Adrenal gland (tissue), 19 donors: ENCODE measurements at regions of chr3 and their contacts with region 1.

Region 1: DNA sequence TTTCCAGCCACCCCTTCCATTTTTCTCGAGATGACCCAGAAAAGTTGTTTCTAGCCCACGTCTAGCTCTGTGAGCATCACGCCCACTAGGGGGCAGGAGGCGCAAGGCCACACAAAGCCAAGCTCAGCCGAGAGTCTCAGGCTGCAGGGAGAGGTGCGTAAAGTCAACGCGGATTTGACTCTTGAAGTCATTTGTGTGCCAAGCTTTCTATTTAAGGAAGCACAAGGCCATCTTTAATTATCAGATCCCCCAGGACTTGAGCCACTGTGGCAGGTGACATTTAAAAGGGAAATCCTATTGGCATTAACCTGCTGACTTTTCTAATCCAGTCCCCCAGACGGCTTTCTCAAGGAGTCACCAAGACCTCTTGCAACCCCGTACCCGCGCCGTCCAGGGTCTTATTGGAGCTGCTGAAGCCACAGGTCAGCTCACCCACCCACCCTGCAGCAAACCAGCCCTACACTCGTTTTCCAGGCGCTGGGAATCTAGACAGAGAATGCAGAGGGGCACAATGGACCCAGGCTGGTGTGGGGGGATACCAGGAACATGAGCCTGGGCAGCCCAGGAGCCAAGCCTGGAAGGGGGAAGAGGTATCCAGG is 62.1 kb downstream of the CAPN7 start:
- DNase-seq: peak; percentile 87 to 96 (median 93)
- H3K4me3 ChIP-seq: no peak overlapping the region
- H3K27ac ChIP-seq: peak overlapping the region; percentile 69 to 94 (median 89)
- H3K4me1 ChIP-seq: peaks cover 54 to 83% of the 10 kb centered on the region in 2 donors
- H3K27me3 ChIP-seq: no peaks in the 10 kb centered on the region
- CTCF ChIP-seq: peak; percentile 91 to 98 (median 96)
- POLR2A ChIP-seq: no peak

Region 2: DNA sequence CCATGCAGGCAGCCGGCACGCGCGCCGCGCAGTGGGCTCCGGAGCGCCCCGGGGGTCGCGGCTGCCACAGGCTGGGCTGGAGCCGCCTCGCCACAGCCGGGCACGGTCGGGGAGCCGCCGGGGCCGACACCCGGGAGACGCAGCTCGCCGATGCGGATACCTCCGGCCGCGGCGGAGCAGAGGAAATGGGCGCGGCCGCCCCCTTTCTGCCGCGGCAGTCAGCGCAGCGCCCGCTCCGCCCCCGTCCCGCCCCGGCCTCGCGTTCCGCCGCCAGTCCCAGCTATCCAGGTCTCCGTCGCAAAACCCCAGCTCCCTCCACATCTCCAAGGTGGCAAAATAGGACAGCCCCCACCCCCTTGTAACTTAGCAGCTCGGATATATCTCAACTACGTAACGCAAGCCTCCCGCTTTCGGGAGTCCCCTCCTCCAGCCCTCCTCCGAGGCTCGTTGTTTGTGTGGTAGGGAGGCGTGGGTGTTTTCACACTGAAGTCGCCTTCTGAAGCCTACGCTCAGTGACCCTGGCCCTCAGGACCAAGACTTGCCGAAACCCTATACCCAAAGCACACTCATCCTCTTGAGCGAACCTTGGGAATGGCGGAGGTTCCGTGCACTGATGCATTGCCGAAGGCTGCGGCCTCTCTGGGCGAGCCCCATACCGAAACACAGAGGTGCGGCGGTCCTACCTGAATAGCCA is 64.4 kb after region 1 on chr3 and contains the start of gene SH3BP5:
- intact Hi-C with region 1: loop called (anchors 5 kb)
- DNase-seq: peak; percentile 86 to 92 (median 90)
- H3K4me3 ChIP-seq: peak within 1 kb of the TSS; percentile 35 to 90 (median 76)
- H3K27ac ChIP-seq: peak within 1 kb of the TSS; percentile 82 to 100 (median 98)
- H3K4me1 ChIP-seq: peaks cover 38 to 54% of the 10 kb centered on the region in 2 donors
- H3K27me3 ChIP-seq: no peaks in the 10 kb centered on the region
- CTCF ChIP-seq: peak; percentile 22 to 92 (median 62)
- POLR2A ChIP-seq: peak; percentile 93 to 94
- total RNA-seq, gene SH3BP5: 134 to 830 (median 184) TPM

Region 3: DNA sequence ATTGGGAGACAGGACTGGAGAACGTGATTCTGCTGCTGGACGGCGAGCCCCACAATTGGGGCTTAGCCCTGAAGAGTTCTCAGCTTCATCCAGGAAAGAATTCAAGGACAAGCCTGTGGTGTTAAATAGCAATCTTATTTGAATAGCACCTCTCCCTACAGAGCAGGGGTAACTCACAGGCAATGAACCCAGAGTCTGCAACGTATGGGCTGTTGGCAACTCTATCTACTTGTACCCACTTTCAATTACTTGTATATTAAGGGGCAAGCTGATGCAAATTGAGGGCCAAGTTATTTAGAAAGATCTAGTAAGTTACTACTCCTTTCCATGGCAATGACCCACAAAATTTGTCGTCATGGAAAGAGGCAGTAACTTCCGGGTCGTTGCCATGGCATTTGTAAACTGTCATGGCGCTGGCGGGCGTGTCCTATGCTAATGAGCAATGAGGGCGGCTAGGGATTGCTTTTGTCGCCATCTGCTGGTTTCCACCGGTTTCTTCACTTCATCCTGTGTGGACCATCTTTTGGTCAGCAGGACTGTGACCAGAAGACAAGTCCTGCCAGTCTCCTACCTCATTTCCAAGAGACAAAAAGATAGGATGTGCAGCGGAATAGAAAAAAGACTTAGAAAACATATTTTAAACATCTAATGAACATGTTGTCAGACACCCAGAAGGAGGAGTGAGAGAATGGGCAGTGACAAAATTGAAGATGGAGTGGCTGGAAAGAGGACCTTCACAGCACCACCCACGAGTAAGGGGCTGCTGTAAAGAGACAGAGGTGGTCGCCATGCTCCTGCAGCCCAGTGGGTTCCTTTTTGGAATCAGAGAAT is 110.0 kb after region 1 on chr3:
- intact Hi-C with region 1: loop called (anchors 5 to 10 kb)
- DNase-seq: peak; percentile 97 to 99 (median 99)
- H3K4me3 ChIP-seq: no peak overlapping the region
- H3K27ac ChIP-seq: peak overlapping the region; percentile 63 to 94 (median 80)
- H3K4me1 ChIP-seq: peaks cover 12 to 18% of the 10 kb centered on the region in 2 donors
- H3K27me3 ChIP-seq: no peaks in the 10 kb centered on the region
- CTCF ChIP-seq: peak; percentile 85 to 97 (median 93)
- POLR2A ChIP-seq: no peak

Region 4: DNA sequence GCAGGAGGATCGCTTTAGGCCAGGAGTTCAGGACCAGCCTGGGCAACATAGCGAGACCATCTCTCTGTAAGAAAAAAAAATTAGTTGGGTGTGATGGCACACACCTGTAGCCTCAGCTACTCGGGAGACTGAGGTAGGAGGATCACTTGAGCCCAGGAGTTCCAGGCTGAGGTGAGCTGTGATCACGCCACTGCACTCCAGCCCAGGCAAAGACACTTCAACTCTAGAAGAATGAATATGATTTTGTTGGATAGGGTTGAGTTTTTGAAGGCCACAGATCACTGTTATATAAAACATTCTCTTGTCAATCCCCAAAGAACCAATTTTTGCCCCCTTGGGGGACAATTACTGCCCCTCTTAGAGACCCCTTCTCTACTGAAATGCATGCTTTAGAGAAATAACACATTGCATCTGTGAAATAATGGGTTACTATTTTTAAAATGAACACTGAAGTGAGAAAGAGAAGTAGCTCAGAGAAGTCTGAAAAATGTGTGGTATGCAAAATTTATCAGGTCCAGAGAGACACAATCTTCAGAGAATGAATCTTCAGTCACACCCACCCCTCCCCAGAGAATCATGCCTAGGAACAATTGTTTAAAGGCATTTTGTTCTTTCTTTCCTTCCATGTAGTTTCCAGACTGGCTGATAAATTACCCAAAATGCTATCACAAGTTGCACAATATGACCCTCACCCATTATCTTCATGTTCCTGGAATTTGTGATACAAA is 116.5 kb after region 1 on chr3:
- intact Hi-C with region 1: loop called (anchors 5 to 10 kb)
- DNase-seq: peak in 5 of 7 donors; percentile 10 to 55 (median 35)
- H3K4me3 ChIP-seq: no peak overlapping the region
- H3K27ac ChIP-seq: peak overlapping the region in 4 of 5 donors; percentile 50 to 83 (median 63)
- H3K4me1 ChIP-seq: peaks cover 41 to 50% of the 10 kb centered on the region in 2 donors
- H3K27me3 ChIP-seq: no peaks in the 10 kb centered on the region
- CTCF ChIP-seq: no peak
- POLR2A ChIP-seq: no peak

Region 5: GRCh38 chr3:15405448-15406050 is 137.4 kb after region 1 on chr3:
- intact Hi-C with region 1: loop called in 1 of 2 experiments (anchors 5 kb)
- DNase-seq: peak in 1 of 7 donors; percentile 51
- H3K4me3 ChIP-seq: no peak overlapping the region
- H3K27ac ChIP-seq: no peak overlapping the region
- H3K4me1 ChIP-seq: peaks cover 0 to 7% of the 10 kb centered on the region in 2 donors
- H3K27me3 ChIP-seq: no peaks in the 10 kb centered on the region
- CTCF ChIP-seq: peak; percentile 59 to 75 (median 68)
- POLR2A ChIP-seq: no peak